Mucosa of descending colon (tissue), 3 donors: ENCODE measurements at regions of chr2 and their contacts with region 1.

Region 1: GRCh38 chr2:9205963-9206948 is at the start of gene ASAP2:
- DNase-seq: peak; percentile 78 to 88 (median 79)
- ATAC-seq: peak; percentile 76
- H3K4me3 ChIP-seq: peak within 1 kb of the TSS; percentile 72
- H3K4me1 ChIP-seq: peaks cover 22% of the 10 kb centered on the region
- CTCF ChIP-seq: peak; percentile 80
- total RNA-seq, gene ASAP2: 50.4 to 84.1 (median 50.5) TPM

Region 2: DNA sequence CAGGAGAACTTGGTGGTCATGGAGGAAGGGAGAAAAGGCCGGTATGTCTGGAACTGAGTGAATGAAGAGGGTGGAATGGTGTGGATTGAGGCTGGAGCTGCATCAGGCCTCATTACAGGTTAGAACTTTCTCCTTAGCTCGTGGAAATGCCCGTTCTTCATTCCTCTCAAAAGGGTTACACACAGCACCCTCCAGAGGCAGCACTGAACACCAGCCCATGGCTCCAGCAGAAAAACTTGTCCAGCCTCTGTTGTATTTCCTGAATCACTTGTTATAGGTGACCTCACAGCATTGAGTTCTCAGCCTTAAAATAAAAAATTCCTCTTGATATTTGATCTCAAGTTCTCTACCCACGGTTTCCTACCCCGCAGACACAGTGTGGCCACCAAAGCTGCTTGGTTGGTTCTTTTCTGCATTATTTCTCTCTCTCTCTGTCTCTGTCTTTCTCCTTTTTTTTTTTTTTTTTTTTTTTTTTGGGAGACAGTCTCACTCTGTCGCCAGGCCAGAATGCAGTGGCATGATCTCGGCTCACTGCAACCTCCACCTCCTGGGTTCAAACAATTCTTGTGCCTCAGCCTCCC is 127.4 kb after region 1 on chr2:
- intact Hi-C with region 1: loop called (anchors 10 kb)
- DNase-seq: peak in 2 of 3 donors; percentile 65 to 72
- ATAC-seq: peak; percentile 64
- H3K4me3 ChIP-seq: no peak overlapping the region
- H3K4me1 ChIP-seq: peaks cover 32% of the 10 kb centered on the region
- CTCF ChIP-seq: no peak

Region 3: GRCh38 chr2:10382354-10383061 is 1176.3 kb after region 1 on chr2:
- intact Hi-C with region 1: no loop called
- DNase-seq: peak; percentile 48 to 82 (median 64)
- ATAC-seq: peak; percentile 76
- H3K4me3 ChIP-seq: no peak overlapping the region
- H3K4me1 ChIP-seq: peaks cover 26% of the 10 kb centered on the region
- CTCF ChIP-seq: no peak